Aorta (tissue), 5 donors: ENCODE measurements at regions of chr22 and their contacts with region 1.

Region 1: DNA sequence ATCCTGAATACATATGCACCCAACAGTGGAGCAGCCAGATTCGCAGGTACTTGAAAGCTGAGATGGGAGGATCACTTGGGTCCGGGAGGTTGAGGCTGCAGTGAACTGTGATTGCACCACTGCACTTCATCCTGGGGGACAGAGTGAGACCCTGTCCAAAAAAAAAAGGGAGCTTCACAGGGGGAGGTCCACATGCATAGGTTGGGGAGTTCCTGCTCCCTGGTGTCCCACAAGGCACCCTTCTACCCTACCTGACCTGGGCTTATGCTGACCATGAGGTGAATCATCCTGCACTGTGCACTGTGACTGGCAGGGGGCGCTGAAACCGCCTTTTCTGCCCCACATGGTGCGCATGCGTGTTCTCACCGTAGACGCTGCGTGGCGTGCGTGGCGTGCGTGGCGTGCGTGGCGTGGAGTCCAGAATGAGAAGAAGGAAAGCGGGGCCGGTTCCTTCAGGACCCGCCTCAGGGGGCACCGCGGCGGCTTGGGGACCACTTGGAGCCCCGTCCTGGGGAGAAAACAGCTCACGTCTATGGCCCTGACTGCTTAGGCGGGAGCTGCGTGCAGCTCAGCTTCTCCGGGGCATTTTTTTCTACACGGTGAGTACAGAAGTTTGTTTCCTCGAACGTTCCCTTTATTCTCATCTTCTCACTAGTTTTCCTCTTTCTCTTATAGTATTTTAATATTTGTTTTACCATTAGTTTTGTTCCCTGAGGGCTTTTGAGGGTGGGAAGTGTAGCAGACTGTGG is 116.6 kb upstream of the GRK3 start:
- DNase-seq: peak; percentile 93 to 96
- ATAC-seq: peak; percentile 98
- H3K4me3 ChIP-seq: peak overlapping the region; percentile 76 to 97
- H3K27ac ChIP-seq: peak overlapping the region in 1 of 2 donors; percentile 34
- H3K4me1 ChIP-seq: no peaks in the 10 kb centered on the region
- H3K27me3 ChIP-seq: no peaks in the 10 kb centered on the region

Region 2: GRCh38 chr22:25404928-25405816 is 42.7 kb before region 1 on chr22:
- intact Hi-C with region 1: loop called in 1 of 2 experiments (anchors 2 kb)
- DNase-seq: peak; percentile 89 to 93
- ATAC-seq: peak; percentile 77
- H3K4me3 ChIP-seq: peak overlapping the region; percentile 86 to 88
- H3K27ac ChIP-seq: peak overlapping the region; percentile 58 to 65
- H3K4me1 ChIP-seq: no peaks in the 10 kb centered on the region
- H3K27me3 ChIP-seq: no peaks in the 10 kb centered on the region

Region 3: DNA sequence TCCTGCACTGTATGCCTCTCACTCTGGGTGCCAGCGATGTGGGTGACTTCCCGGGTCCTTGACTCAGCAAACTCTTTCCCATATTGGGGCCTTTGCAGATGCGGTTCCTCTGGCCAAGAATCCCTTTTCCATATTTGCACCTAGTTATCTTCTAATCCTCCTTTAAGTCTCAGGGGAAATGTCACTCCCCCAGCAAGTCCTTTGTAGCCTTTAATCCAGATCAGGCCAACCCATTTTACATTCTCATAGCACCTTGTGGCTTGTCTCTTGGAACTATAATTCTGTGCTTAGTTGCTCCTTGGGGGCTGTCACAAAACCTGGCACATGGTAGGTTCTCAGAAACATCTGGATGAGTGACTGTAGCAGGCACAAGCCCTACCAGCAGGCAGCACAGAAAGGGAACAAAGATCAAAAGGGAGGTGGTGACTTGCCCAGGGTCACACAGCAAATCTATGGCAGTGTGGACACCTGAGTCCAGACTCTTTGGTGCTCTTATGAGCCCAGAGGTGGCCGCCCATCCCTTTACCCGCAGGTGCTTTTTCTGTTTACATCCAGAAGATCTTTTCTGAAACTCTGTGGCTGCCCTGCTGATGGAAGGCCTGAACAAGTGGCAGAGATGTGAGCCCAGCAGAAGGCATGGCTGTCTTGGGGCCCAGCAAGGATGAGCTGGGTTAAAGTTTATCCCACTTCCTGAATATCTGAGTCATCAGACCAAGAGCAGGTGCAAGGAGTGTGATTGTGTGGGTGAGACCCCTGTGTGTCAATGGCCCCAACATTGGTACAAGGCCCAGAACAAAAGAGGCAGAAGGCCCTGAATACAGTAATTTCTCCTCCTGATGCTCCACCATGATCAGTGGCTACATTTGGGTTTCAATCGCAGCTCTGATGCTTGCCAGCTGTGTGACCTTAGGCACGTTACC is 38.0 kb after region 1 on chr22:
- intact Hi-C with region 1: no loop called
- DNase-seq: no peak
- ATAC-seq: no peak
- H3K4me3 ChIP-seq: no peak overlapping the region
- H3K27ac ChIP-seq: no peak overlapping the region
- H3K4me1 ChIP-seq: peaks cover 0 to 3% of the 10 kb centered on the region in 2 donors
- H3K27me3 ChIP-seq: no peaks in the 10 kb centered on the region